ENCODE measurements at regions of chr5 and their contacts with region 1.

Region 1: DNA sequence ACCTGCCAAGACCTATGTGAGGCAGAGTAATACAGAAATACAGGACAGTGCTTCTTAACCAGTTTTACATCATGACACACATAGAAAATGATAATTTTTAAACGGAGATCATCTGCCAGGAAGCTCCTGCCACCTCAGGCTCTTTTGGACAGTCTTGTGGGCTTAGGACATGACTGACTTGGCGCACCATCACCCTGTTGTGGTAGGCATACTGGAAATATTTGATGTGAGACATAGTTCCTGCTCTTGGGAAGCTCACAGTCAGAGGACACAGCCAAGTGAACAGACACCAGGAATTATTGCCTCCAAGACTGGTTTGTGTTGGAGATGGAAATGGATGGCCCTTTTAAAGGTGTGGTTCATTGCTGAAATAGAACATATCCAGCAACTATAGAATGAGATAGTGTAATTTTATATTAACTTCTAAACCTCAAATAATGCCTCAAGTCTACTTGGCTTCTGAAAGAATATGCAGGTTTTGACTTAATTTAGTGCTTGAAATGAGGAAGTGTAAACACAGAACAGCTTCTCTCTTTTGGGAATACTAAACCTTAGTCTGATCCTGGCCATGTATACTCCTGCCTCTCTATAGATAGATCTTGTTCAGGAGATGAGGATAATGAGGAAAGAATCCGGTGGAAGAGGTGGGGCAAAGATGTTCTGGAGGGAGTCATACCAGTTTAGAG is 19.7 kb downstream of the CPEB4 start:
- DNase-seq: no peak
- ATAC-seq: peak in 3 of 4 donors; percentile 16 to 44 (median 38)
- H3K4me3 ChIP-seq: no peak overlapping the region
- H3K27ac ChIP-seq: peak overlapping the region in 1 of 4 donors; percentile 41
- H3K4me1 ChIP-seq: peaks cover 16 to 38% (median 38%) of the 10 kb centered on the region in 3 donors
- H3K27me3 ChIP-seq: no peaks in the 10 kb centered on the region
- CTCF ChIP-seq: no peak

Region 2: GRCh38 chr5:173963867-173964441 is 56.1 kb after region 1 on chr5:
- intact Hi-C with region 1: loop called in 1 of 3 experiments (anchors 10 kb)
- DNase-seq: no peak
- ATAC-seq: peak in 3 of 4 donors; percentile 53 to 65 (median 61)
- H3K4me3 ChIP-seq: peak overlapping the region in 1 of 4 donors; percentile 14
- H3K27ac ChIP-seq: peak overlapping the region in 3 of 4 donors; percentile 31 to 48 (median 34)
- H3K4me1 ChIP-seq: peaks cover 0 to 12% (median 9%) of the 10 kb centered on the region in 3 donors
- H3K27me3 ChIP-seq: no peaks in the 10 kb centered on the region
- CTCF ChIP-seq: no peak

Region 3: GRCh38 chr5:174910245-174910737 is 1002.5 kb after region 1 on chr5:
- intact Hi-C with region 1: no loop called
- DNase-seq: peak; percentile 48 to 89 (median 71)
- ATAC-seq: peak; percentile 83 to 100 (median 100)
- H3K4me3 ChIP-seq: peak overlapping the region in 1 of 4 donors; percentile 26
- H3K27ac ChIP-seq: no peak overlapping the region
- H3K4me1 ChIP-seq: no peaks in the 10 kb centered on the region
- H3K27me3 ChIP-seq: no peaks in the 10 kb centered on the region
- CTCF ChIP-seq: peak; percentile 76 to 92 (median 88)